ENCODE measurements at regions of chr19 and their contacts with region 1.

Region 1: DNA sequence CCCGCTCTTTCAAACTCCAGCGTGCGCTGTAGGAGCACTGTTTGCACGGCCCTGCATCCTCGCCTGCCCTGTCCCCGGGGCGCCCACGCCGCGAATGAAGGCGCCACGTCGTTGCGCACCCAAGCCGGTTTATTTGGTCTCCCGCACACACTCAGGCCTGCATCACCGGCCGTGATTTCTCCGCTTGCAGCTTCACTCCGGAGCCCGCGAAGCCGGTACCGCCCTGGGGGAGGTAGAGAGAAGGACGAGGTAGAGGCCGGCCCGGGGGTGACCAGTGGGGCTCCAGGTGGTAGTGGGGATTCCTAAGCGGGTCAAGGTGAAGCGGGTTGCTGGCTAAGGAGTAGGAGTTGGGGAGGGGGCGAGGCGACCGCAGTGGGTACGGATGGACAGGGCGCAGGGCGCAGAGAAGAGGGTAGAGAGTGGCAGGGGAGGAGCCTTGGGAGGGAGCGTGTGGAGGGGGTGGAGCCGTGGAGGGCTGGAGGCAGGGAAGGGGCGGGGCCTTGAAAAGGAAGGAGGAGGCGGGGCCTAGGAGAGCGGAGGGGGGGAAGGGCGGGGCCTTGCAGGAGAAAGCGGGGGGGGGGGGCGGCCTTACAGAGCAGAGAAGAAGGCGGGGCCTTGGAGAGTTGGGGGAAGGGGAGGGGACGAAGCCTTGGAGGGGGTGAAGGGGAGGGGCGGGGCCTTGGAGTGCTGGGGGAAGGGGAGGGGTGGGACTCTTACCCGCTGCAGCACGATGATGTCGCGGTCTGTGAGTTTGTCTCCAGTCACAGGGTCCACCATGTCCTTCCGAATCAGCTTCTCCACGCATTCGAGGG is 24.6 kb downstream of the NOSIP start:
- DNase-seq: peak; percentile 94
- ATAC-seq: peak; percentile 65
- H3K4me3 Mint-ChIP-seq: peak overlapping the region; percentile 63
- H3K27ac Mint-ChIP-seq: peak overlapping the region; percentile 94
- H3K4me1 Mint-ChIP-seq: peaks cover 76% of the 10 kb centered on the region
- H3K27me3 Mint-ChIP-seq: no peaks in the 10 kb centered on the region
- CTCF ChIP-seq: no peak

Region 2: DNA sequence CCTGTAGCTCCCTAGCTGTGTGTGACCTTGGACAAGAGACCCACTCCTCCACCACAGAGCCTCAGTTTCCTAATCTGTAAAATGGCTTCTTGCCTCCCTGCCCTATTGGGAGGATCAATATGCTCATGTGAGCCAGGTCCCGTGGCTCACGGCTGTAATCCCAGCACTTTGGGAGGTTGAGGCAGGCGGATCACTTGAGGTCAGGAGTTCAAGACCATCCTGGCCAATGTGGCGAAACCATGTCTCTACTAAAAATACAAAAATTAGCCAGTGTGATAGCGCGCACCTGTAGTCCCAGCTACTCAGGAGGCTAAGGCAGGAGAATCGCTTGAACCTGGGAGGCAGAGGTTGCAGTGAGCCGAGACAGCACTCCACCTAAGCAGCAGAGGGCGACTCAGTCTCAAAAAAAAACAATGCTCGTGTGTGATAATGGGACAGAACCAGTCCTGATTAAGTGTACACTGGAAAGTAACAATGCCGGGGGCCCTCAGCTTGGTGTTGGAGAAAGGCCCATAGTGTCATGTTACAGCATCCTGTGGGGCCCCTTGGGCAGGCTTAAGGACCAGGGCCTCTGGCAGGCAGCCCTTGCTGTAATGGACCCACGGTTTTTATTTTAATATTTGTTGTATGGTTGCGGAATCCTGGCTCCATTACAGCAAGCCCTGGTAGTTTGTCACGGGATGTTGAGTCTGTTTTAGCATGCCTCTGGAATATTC is 52.8 kb before region 1 on chr19:
- CTCF ChIA-PET with region 1: interaction called, 232 read pairs
- POLR2A ChIA-PET with region 1: interaction called, 6 read pairs
- intact Hi-C with region 1: no loop called
- DNase-seq: peak; percentile 60
- ATAC-seq: no peak
- H3K4me3 Mint-ChIP-seq: no peak overlapping the region
- H3K27ac Mint-ChIP-seq: no peak overlapping the region
- H3K4me1 Mint-ChIP-seq: peaks cover 41% of the 10 kb centered on the region
- H3K27me3 Mint-ChIP-seq: no peaks in the 10 kb centered on the region
- CTCF ChIP-seq: peak; percentile 48

Region 3: DNA sequence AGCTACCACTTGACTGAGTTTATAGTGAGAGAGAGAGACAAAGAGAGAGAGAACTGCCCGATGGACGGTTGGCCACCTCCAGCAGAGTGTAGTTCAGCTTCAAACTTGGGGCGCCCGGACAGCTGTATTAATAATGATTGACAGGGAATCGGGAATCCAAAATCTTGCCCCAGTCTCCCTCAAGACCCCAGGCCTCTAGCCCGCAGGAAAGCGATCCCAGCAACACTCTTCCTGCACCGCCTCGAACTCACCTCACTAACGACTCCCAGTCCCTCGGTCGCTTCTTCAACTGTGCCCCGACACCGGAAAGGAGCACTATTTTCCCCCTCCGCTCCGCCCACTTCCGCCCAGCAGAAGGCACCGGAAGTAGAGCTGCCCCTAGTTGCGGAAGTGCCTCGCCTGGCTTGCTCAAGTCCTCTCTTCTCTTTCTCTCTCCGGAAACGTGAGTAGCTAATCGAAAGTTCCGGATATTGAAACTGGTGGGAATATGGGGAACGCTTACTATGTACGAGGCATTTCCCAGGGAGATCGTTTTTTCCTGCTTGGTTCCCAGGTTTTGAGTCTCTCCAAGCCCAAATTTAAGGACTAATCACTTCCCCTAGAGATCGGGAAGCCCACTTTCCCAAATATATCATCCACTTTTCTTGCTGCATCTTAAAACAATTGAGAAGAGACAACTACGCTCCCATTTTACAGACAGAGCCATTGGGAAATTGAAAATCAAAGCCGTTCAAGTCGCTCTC is 24.6 kb after region 1 on chr19 and contains the start of gene NOSIP:
- CTCF ChIA-PET with region 1: interaction called, 5 read pairs
- POLR2A ChIA-PET with region 1: interaction called, 32 read pairs
- intact Hi-C with region 1: no loop called
- DNase-seq: peak; percentile 97
- ATAC-seq: peak; percentile 98
- H3K4me3 Mint-ChIP-seq: peak within 1 kb of the TSS; percentile 95
- H3K27ac Mint-ChIP-seq: peak within 1 kb of the TSS; percentile 90
- H3K4me1 Mint-ChIP-seq: peaks cover 32% of the 10 kb centered on the region
- H3K27me3 Mint-ChIP-seq: no peaks in the 10 kb centered on the region
- CTCF ChIP-seq: no peak
- total RNA-seq, gene NOSIP: 75.6 to 79.4 TPM

Measured in activated CD8-positive, alpha-beta T cell treated with anti-CD3 and anti-CD28 coated beads for 36 hours (primary cell).